HepG2 (cell line): ENCODE measurements at regions of chr20 and their contacts with region 1.

Region 1: DNA sequence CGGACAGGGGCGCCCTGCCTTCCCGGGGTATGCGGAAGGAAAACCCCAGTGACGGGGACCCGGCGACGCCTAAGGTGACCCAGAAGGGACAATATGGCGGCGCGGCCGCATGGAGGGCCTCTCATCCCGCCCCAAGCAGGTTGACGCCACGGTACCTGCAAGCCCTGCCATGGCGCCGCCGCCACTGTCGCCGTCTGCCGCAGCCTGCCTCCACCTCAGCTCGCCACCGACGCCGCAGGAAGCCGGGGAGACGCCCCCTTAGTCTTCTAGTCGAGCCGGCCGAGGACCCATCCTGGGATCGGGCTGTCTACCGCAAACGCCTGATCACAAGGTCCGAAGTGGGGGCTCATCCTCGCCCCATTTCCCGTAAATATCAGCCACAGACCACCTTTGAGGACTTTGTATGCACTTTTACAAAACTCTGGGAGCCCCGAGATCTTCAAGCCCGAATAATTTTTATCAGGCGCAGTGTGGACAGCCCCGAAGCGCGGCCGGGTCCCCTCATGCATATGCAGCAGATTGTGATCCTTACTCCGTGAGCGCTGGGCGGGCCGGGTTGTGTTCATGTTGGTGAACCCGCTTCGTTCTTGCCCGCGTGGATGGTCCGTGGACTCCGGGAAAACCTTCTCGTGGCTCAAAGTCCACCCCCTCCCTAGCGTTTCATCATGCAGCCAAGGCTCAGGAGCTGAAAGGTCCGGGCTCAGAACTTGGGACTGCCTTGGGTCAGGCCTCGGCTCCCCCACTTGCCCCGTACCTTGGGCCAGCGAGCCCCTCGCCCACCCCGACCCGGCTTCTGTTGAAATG is at the start of gene BLCAP:
- DNase-seq: peak; percentile 93
- ATAC-seq: peak; percentile 91
- H3K4me3 ChIP-seq: peak within 1 kb of the TSS; percentile 82 to 100 (median 95)
- H3K27ac ChIP-seq: peak within 1 kb of the TSS; percentile 96
- H3K4me1 ChIP-seq: peaks cover 65% of the 10 kb centered on the region
- H3K27me3 ChIP-seq: no peaks in the 10 kb centered on the region; a peak in 1 of 5 replicates
- CTCF ChIP-seq: peak; percentile 39
- EP300 ChIP-seq: peak; percentile 24 to 46; a peak in 3 of 4 replicates
- POLR2A ChIP-seq: peak; percentile 92 to 95
- RAD21 ChIP-seq: peak; percentile 44
- total RNA-seq, gene BLCAP: 34.9 and 52.4 TPM in 2 replicates

Region 2: GRCh38 chr20:37192137-37192854 is 335.5 kb before region 1 on chr20:
- CTCF ChIA-PET with region 1: no interaction called
- POLR2A ChIA-PET with region 1: interaction called, 4 read pairs
- in situ Hi-C with region 1: loop called (anchors 5 kb)
- intact Hi-C with region 1: no loop called
- DNase-seq: peak; percentile 80
- ATAC-seq: peak; percentile 89
- H3K4me3 ChIP-seq: no peak overlapping the region
- H3K27ac ChIP-seq: no peak overlapping the region
- H3K4me1 ChIP-seq: peaks cover 30% of the 10 kb centered on the region
- H3K27me3 ChIP-seq: no peaks in the 10 kb centered on the region
- CTCF ChIP-seq: peak; percentile 96
- EP300 ChIP-seq: no peak
- POLR2A ChIP-seq: peak in 1 of 2 experiments; percentile 30; a peak in 1 of 4 replicates
- RAD21 ChIP-seq: no peak; the same call in 1 of the 2 replicates

Region 3: DNA sequence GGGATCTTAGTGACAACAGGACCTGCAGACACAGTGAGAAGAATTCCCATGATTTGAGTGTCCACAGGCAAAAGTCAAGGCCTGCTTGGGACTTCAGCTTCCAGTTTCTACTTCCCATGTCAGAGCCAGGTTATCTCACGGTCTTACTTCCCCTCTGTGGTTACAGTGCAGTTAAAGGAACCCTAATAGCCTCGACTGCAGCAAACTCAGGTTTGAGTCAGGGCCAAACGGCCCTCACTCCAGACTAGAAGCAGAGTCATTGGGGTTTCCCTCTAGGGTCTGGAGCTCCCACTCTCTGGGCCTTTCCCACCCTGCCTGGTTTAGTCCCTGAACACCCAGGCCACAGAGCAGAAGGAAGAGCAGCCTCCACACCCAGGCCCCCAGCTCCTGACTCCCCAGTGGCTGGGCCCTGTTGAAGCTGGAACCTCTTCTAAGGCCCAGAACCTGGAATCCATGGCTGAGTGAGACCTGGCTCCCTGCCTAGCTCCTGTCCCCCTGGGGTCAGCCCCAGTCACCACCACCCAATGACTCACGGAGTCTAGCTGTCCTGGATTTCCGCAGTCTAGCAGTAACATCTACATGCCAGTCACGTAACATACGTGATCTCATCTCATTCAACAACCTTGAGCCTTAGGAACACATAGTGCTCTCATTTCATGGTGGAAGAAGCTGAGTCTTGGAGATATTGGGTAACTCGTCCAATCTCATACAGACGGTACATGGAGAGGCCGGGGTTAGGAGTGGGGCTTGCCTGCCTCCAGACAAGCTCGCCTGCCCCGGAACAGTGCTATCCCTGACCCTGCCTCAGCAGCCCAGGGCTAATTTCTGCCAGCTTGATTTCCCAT is 257.0 kb before region 1 on chr20:
- CTCF ChIA-PET with region 1: interaction called, 58 read pairs
- POLR2A ChIA-PET with region 1: interaction called, 21 read pairs
- in situ Hi-C with region 1: loop called (anchors 5 kb)
- intact Hi-C with region 1: no loop called
- DNase-seq: peak; percentile 75
- ATAC-seq: peak; percentile 66
- H3K4me3 ChIP-seq: peak overlapping the region in 2 of 3 experiments; percentile 9 to 43; a peak in 4 of 6 replicates
- H3K27ac ChIP-seq: no peak overlapping the region
- H3K4me1 ChIP-seq: peaks cover 61% of the 10 kb centered on the region
- H3K27me3 ChIP-seq: peaks cover 4 to 14% of the 10 kb centered on the region in 2 experiments; a peak in 4 of 5 replicates
- CTCF ChIP-seq: no peak
- EP300 ChIP-seq: no peak
- POLR2A ChIP-seq: 0 out of 4 replicates have a peak, but pooled peaks of 1 of the 2 experiments have one; percentile 25
- RAD21 ChIP-seq: no peak

Region 4: GRCh38 chr20:37288091-37288490 is 239.7 kb before region 1 on chr20:
- CTCF ChIA-PET with region 1: no interaction called
- POLR2A ChIA-PET with region 1: interaction called, 14 read pairs
- in situ Hi-C with region 1: no loop called
- intact Hi-C with region 1: no loop called
- DNase-seq: no peak
- ATAC-seq: no peak
- H3K4me3 ChIP-seq: no peak overlapping the region
- H3K27ac ChIP-seq: no peak overlapping the region
- H3K4me1 ChIP-seq: peaks cover 73% of the 10 kb centered on the region
- H3K27me3 ChIP-seq: no peaks in the 10 kb centered on the region; a peak in 1 of 5 replicates
- CTCF ChIP-seq: no peak
- EP300 ChIP-seq: no peak
- POLR2A ChIP-seq: no peak
- RAD21 ChIP-seq: no peak

Region 5: GRCh38 chr20:37390891-37391525 is 136.8 kb before region 1 on chr20:
- CTCF ChIA-PET with region 1: no interaction called
- POLR2A ChIA-PET with region 1: interaction called, 10 read pairs
- in situ Hi-C with region 1: no loop called
- intact Hi-C with region 1: no loop called
- DNase-seq: peak; percentile 93
- ATAC-seq: peak; percentile 86
- H3K4me3 ChIP-seq: peak overlapping the region in 1 of 3 experiments; percentile 35; a peak in 2 of 6 replicates
- H3K27ac ChIP-seq: peak overlapping the region; percentile 74
- H3K4me1 ChIP-seq: peaks cover 57% of the 10 kb centered on the region
- H3K27me3 ChIP-seq: no peaks in the 10 kb centered on the region
- CTCF ChIP-seq: peak; percentile 43
- EP300 ChIP-seq: peak in 1 of 2 experiments; percentile 88; a peak in 3 of 4 replicates
- POLR2A ChIP-seq: peak; percentile 40 to 55; a peak in 1 of 4 replicates
- RAD21 ChIP-seq: peak; percentile 54; the same call in 1 of the 2 replicates

Region 6: GRCh38 chr20:37406010-37406998 is 121.5 kb before region 1 on chr20:
- CTCF ChIA-PET with region 1: no interaction called
- POLR2A ChIA-PET with region 1: no interaction called
- in situ Hi-C with region 1: loop called (anchors 5 kb)
- intact Hi-C with region 1: no loop called
- DNase-seq: no peak
- ATAC-seq: peak; percentile 40
- H3K4me3 ChIP-seq: peak overlapping the region in 2 of 3 experiments; percentile 23 to 55; a peak in 3 of 6 replicates
- H3K27ac ChIP-seq: no peak overlapping the region
- H3K4me1 ChIP-seq: peaks cover 41% of the 10 kb centered on the region
- H3K27me3 ChIP-seq: peaks cover 7 to 43% of the 10 kb centered on the region in 2 experiments
- CTCF ChIP-seq: 0 out of 2 replicates have a peak, but pooled peaks have one; percentile 13
- EP300 ChIP-seq: no peak
- POLR2A ChIP-seq: peak; percentile 41 to 47; a peak in 3 of 4 replicates
- RAD21 ChIP-seq: peak; percentile 80

Region 7: DNA sequence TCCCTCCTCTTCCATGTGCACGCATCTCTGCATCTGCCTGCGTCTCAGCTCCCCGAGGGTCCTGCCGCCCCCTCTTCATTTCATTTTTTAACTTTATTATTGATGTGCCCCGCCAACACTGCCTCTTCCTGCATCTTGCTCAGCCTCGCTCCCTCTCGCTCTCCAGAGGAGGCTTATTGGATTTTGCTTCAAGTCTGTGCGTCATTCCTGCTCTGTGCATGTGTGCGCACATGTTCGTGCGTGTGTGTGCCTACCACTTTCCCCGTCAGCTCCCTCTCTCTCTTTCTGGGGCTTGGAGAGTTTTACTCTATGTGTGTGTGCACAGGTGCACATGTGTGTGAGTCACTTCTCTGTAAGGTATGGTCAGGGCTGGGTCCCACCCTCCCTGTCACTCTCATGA is 78.6 kb before region 1 on chr20:
- CTCF ChIA-PET with region 1: no interaction called
- POLR2A ChIA-PET with region 1: no interaction called
- in situ Hi-C with region 1: no loop called
- intact Hi-C with region 1: no loop called
- DNase-seq: no peak
- ATAC-seq: no peak
- H3K4me3 ChIP-seq: no peak overlapping the region
- H3K27ac ChIP-seq: no peak overlapping the region
- H3K4me1 ChIP-seq: no peaks in the 10 kb centered on the region
- H3K27me3 ChIP-seq: peaks cover 6 to 36% of the 10 kb centered on the region in 2 experiments; a peak in 4 of 5 replicates
- CTCF ChIP-seq: no peak
- EP300 ChIP-seq: no peak
- POLR2A ChIP-seq: no peak
- RAD21 ChIP-seq: no peak

Region 8: DNA sequence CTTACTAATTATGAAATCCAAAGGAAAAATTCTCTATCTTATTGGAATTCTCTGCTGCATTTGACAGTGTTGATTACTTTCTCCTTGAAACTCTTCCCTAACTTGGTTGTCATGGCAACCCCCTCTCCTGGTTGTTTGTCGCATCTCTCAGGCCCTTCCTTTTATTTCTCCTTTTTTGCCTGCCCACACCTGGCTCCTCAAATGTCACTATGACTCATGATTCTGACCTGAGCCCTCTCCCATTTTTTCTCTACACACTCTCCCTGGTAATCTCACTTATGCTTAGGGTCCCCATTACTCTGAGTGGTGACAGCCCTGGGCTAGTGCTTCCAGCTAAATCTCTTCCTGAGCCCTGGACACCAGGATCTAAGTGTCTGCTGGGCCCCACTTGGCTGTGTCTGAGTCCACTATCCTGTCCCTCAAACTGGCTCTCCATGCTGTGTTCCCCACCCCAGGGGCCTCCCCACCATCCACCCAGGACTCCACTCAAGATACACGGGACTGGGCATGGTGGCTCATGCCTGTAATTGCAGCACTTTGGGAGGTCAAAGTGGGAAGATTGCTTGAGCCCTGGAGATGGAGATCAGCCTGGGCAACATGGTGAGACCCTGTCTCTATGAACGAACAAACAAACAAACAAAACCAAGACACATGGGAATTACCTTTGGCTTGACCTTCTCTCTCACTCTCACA is 23.3 kb before region 1 on chr20:
- CTCF ChIA-PET with region 1: no interaction called
- POLR2A ChIA-PET with region 1: interaction called, 44 read pairs
- in situ Hi-C with region 1: no loop called
- intact Hi-C with region 1: loop called (anchors 2 kb)
- DNase-seq: no peak
- ATAC-seq: peak; percentile 11
- H3K4me3 ChIP-seq: no peak overlapping the region
- H3K27ac ChIP-seq: no peak overlapping the region
- H3K4me1 ChIP-seq: peaks cover 38% of the 10 kb centered on the region
- H3K27me3 ChIP-seq: no peaks in the 10 kb centered on the region
- CTCF ChIP-seq: no peak
- EP300 ChIP-seq: no peak
- POLR2A ChIP-seq: no peak
- RAD21 ChIP-seq: no peak